Transverse colon (tissue), 4 donors: ENCODE measurements at regions of chr4 and their contacts with region 1.

Region 1: GRCh38 chr4:103842637-103843239 is 123.0 kb upstream of the TACR3 start:
- DNase-seq: no peak
- H3K4me3 ChIP-seq: no peak overlapping the region
- H3K27ac ChIP-seq: no peak overlapping the region
- H3K4me1 ChIP-seq: no peaks in the 10 kb centered on the region
- H3K27me3 ChIP-seq: no peaks in the 10 kb centered on the region
- CTCF ChIP-seq: no peak
- EP300 ChIP-seq: no peak
- POLR2A ChIP-seq: no peak

Region 2: GRCh38 chr4:102687373-102687981 is 1155.3 kb before region 1 on chr4:
- in situ Hi-C with region 1: no loop called
- intact Hi-C with region 1: loop called (anchors 10 kb)
- DNase-seq: no peak
- H3K4me3 ChIP-seq: no peak overlapping the region
- H3K27ac ChIP-seq: no peak overlapping the region
- H3K4me1 ChIP-seq: no peaks in the 10 kb centered on the region
- H3K27me3 ChIP-seq: no peaks in the 10 kb centered on the region
- CTCF ChIP-seq: no peak
- EP300 ChIP-seq: no peak
- POLR2A ChIP-seq: no peak

Region 3: GRCh38 chr4:105306158-105306781 is 1463.5 kb after region 1 on chr4:
- in situ Hi-C with region 1: no loop called
- intact Hi-C with region 1: no loop called
- DNase-seq: no peak
- H3K4me3 ChIP-seq: no peak overlapping the region
- H3K27ac ChIP-seq: no peak overlapping the region
- H3K4me1 ChIP-seq: no peaks in the 10 kb centered on the region
- H3K27me3 ChIP-seq: no peaks in the 10 kb centered on the region
- CTCF ChIP-seq: no peak
- EP300 ChIP-seq: no peak
- POLR2A ChIP-seq: no peak

Region 4: GRCh38 chr4:105426187-105426897 is 1583.6 kb after region 1 on chr4:
- in situ Hi-C with region 1: no loop called
- intact Hi-C with region 1: no loop called
- DNase-seq: no peak
- H3K4me3 ChIP-seq: no peak overlapping the region
- H3K27ac ChIP-seq: no peak overlapping the region
- H3K4me1 ChIP-seq: no peaks in the 10 kb centered on the region
- H3K27me3 ChIP-seq: no peaks in the 10 kb centered on the region
- CTCF ChIP-seq: no peak
- EP300 ChIP-seq: no peak
- POLR2A ChIP-seq: no peak